Calu3 (cell line): ENCODE measurements at regions of chr5 and their contacts with region 1.

Region 1: DNA sequence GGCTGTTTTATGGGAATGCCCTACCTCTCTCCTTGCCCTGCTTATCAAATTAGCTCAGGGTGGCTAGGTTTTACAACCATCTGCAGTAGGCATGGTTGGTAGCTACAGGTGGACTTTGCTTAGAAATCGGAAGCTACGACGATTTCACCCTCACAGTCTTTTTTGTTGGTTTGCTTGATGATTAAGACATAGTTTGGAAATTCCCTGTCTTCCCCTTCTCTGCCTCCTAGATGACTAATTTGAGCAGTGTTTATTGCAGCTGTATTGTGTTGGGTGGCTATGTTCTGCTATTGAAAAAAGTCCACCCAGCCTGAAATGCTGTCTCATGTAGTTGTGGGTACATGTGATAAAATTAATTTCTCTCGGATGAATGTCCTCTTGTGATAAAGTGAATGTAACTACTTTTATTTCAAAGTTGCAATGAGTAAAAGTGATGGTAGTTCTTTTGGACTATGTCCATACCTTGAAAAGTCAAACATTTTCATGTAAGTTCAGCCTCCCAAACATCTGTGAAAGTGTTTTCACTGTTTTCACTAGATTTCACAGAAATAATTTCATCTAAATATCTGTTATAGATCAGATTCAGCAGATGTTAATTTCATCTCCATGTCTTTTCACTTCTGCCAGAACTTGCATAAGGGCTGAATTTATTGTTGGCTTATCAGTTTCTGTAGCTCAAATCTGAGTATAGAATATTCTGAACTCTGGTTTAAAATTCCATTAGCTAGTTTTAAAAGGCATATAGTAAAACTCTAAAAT is 37.3 kb upstream of the FYB1 start:
- DNase-seq: peak; percentile 12
- H3K4me3 Mint-ChIP-seq: peak overlapping the region; percentile 34
- H3K27ac Mint-ChIP-seq: peak overlapping the region; percentile 60
- H3K4me1 Mint-ChIP-seq: peaks cover 43% of the 10 kb centered on the region
- H3K27me3 Mint-ChIP-seq: no peaks in the 10 kb centered on the region
- CTCF ChIP-seq: no peak

Region 2: GRCh38 chr5:39231705-39232525 is 24.7 kb before region 1 on chr5:
- CTCF ChIA-PET with region 1: no interaction called
- intact Hi-C with region 1: loop called (anchors 2 kb)
- DNase-seq: peak; percentile 37
- H3K4me3 Mint-ChIP-seq: no peak overlapping the region
- H3K27ac Mint-ChIP-seq: peak overlapping the region; percentile 45
- H3K4me1 Mint-ChIP-seq: peaks cover 15% of the 10 kb centered on the region
- H3K27me3 Mint-ChIP-seq: no peaks in the 10 kb centered on the region
- CTCF ChIP-seq: no peak

Region 3: DNA sequence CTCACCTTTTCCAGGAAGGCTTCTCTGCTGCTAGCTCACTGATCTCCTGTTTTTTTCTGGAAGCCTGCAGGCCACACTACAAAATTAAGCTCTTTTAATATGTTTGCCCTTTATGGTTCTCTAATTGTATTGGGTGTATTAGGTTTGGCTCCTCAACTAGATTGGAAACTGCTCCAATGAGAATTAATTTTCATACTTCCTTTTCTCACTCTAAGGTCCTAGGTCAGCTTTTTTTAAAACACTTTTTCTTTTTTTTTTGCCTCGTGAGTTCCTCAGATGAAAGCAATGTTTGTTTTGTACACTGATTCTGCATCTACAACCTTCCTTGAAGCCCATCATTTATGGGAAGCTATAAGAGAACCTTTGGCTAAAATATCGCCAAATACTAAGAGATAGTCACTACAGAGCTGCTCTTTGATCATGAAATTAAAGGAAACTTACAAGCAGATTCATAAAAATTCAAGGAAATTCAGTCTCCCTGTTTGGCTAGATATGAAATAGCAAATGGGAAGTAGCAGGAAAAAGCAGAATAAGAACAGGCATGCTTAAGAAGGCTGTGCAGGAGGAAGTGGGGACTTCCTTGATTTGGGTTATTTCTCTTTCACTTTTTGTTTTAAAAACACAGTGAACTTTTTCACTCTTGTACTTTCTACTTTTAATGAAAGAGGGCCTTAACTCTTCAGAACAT is 17.9 kb after region 1 on chr5:
- CTCF ChIA-PET with region 1: interaction called, 3 read pairs
- intact Hi-C with region 1: loop called (anchors 2 kb)
- DNase-seq: no peak
- H3K4me3 Mint-ChIP-seq: no peak overlapping the region
- H3K27ac Mint-ChIP-seq: peak overlapping the region; percentile 70
- H3K4me1 Mint-ChIP-seq: peaks cover 16% of the 10 kb centered on the region
- H3K27me3 Mint-ChIP-seq: no peaks in the 10 kb centered on the region
- CTCF ChIP-seq: no peak